IMR-90 (cell line): ENCODE measurements at regions of chr12 and their contacts with region 1.

Region 1: GRCh38 chr12:6430124-6430989 is 14.4 kb upstream of the CD27 start:
- DNase-seq: peak; percentile 96
- ATAC-seq: peak; percentile 92
- H3K4me3 ChIP-seq: peak overlapping the region; percentile 1; the same call in 1 of the 2 replicates
- H3K27ac ChIP-seq: peak overlapping the region; percentile 87
- H3K4me1 ChIP-seq: peaks cover 12% of the 10 kb centered on the region
- H3K27me3 ChIP-seq: no peaks in the 10 kb centered on the region
- CTCF ChIP-seq: no peak
- POLR2A ChIP-seq: peak; percentile 52; the same call in 1 of the 2 replicates
- RAD21 ChIP-seq: no peak

Region 2: DNA sequence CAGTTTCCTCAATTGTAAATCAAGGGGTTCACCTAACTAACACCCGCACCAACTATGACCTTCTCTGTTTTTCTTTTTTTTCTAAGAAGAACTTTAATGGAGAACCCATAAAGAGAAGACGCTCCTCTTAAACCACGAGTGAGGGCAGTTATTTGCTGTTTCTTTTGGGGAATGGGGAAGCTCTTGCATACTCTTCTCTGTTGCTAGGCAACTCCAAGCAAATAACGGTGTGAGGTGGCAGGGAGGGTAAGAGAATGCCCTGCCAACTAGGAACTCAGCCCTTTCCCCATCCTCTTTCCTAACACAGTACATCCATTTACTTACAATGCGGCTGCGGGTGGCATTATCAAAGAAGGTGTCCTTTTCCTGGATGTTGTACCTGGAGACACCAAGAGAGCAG is 600.2 kb before region 1 on chr12:
- CTCF ChIA-PET with region 1: no interaction called
- POLR2A ChIA-PET with region 1: no interaction called
- dilution Hi-C with region 1: no loop called
- in situ Hi-C with region 1: no loop called
- intact Hi-C with region 1: no loop called
- DNase-seq: no peak
- ATAC-seq: no peak
- H3K4me3 ChIP-seq: no peak overlapping the region
- H3K27ac ChIP-seq: no peak overlapping the region
- H3K4me1 ChIP-seq: no peaks in the 10 kb centered on the region
- H3K27me3 ChIP-seq: peaks cover 19% of the 10 kb centered on the region
- CTCF ChIP-seq: no peak
- POLR2A ChIP-seq: no peak
- RAD21 ChIP-seq: no peak

Region 3: DNA sequence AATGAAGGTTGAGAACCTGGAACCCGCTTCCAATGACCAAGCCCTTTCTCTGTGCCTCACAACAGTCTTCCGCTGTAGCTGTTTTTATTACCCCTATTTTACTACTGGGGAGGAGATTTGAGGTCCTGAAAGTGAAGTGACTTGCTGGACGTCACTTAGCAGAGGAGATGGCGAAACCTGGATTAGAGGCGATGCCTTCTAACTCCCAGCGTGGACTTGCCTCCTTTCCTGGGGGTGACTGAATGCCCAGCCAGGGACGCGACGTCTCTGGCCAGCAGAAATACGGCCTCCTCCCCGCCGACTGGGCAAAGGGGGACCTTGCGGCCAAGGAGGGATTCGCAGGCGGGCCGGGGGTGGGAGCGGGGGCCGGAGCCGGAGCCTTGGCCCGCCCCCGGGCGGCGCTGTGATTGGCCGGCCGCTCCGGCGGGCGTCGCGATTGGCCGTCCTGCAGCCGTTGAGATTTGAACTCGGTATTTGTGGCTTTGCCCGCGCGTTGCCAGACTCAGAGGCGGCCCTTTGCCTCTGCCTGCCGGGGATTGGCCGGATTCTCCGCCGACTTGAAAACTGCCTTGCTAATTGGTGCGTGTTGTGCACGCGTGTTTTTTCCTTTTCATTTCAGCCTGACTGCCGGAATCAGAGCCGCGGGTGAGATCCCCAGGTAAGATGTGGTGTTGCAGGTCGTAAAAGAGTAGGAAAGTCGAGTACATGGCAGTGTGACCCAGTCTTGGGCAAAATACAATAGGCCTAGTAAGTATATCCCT is 63.3 kb after region 1 on chr12 and contains the start of gene NCAPD2:
- CTCF ChIA-PET with region 1: no interaction called
- POLR2A ChIA-PET with region 1: no interaction called
- dilution Hi-C with region 1: no loop called
- in situ Hi-C with region 1: no loop called
- intact Hi-C with region 1: loop called (anchors 2 kb)
- DNase-seq: peak; percentile 93
- ATAC-seq: peak; percentile 97
- H3K4me3 ChIP-seq: peak within 1 kb of the TSS; percentile 83
- H3K27ac ChIP-seq: peak within 1 kb of the TSS; percentile 94
- H3K4me1 ChIP-seq: no peaks in the 10 kb centered on the region; the same call in 1 of the 2 replicates
- H3K27me3 ChIP-seq: no peaks in the 10 kb centered on the region
- CTCF ChIP-seq: no peak
- POLR2A ChIP-seq: peak; percentile 93
- RAD21 ChIP-seq: no peak
- total RNA-seq, gene NCAPD2: 52.8 and 57.9 TPM in 2 replicates